CD8-positive, alpha-beta T cell (primary cell): ENCODE measurements at regions of chr6 and their contacts with region 1.

Region 1: GRCh38 chr6:34236131-34236996 is at the start of gene HMGA1:
- DNase-seq: peak; percentile 75 to 95 (median 90)
- ATAC-seq: peak; percentile 70
- H3K4me3 ChIP-seq: peak within 1 kb of the TSS; percentile 77 to 90
- H3K4me3 Mint-ChIP-seq: peak within 1 kb of the TSS; percentile 90
- H3K27ac ChIP-seq: peak within 1 kb of the TSS; percentile 71 to 95
- H3K27ac Mint-ChIP-seq: peak within 1 kb of the TSS; percentile 99
- H3K4me1 ChIP-seq: peaks cover 22% of the 10 kb centered on the region
- H3K4me1 Mint-ChIP-seq: peaks cover 33% of the 10 kb centered on the region
- H3K27me3 ChIP-seq: no peaks in the 10 kb centered on the region
- H3K27me3 Mint-ChIP-seq: no peaks in the 10 kb centered on the region
- CTCF ChIP-seq: no peak
- total RNA-seq, gene HMGA1: 107 to 113 TPM

Region 2: DNA sequence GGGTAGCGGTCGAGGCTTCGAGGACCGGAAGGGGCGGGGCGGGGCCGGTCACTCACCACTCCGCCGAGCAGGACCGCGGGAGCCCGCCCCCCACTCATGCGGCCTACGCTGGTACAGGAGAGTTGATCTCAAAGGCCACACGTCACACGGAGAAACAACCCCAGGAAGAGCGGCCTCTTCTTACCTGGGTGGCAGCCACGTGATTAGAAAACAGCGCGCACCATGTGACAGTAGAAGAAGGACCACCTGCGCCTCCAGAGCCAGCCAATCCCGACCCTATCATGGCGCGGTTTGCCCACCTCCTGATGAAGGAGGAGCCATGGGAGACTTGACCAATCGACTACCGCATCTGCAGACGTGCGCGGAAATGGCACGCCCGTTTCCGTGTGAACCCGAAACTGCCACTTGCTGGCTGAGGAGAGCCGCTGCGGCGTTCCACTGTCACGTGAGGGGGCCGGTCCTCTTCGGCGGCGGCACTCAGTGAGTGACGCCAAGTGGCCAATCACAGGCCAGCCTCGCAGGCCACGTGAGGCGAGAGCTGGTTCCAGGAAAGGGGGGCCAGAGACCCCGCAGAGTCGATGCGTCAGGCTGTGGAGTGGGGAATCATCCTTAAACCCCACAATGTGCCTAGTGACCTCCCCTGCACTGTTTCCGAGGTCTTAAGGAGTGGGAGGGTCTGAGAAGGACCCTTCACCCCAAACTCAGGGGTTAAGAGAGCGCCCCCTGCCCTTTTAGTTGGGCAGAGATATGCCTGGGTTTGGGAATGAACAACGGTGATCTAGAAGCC is 818.3 kb before region 1 on chr6 and contains the start of gene CUTA:
- CTCF ChIA-PET with region 1: no interaction called
- POLR2A ChIA-PET with region 1: no interaction called
- intact Hi-C with region 1: loop called (anchors 5 to 10 kb)
- DNase-seq: peak; percentile 96 to 100 (median 99)
- ATAC-seq: peak; percentile 87
- H3K4me3 ChIP-seq: peak within 1 kb of the TSS; percentile 68 to 70
- H3K4me3 Mint-ChIP-seq: peak within 1 kb of the TSS; percentile 94
- H3K27ac ChIP-seq: peak within 1 kb of the TSS; percentile 83 to 88
- H3K27ac Mint-ChIP-seq: peak within 1 kb of the TSS; percentile 97
- H3K4me1 ChIP-seq: peaks cover 68% of the 10 kb centered on the region
- H3K4me1 Mint-ChIP-seq: peaks cover 83% of the 10 kb centered on the region
- H3K27me3 ChIP-seq: no peaks in the 10 kb centered on the region
- H3K27me3 Mint-ChIP-seq: no peaks in the 10 kb centered on the region
- CTCF ChIP-seq: peak; percentile 27
- total RNA-seq, gene CUTA: 159 to 177 TPM

Region 3: DNA sequence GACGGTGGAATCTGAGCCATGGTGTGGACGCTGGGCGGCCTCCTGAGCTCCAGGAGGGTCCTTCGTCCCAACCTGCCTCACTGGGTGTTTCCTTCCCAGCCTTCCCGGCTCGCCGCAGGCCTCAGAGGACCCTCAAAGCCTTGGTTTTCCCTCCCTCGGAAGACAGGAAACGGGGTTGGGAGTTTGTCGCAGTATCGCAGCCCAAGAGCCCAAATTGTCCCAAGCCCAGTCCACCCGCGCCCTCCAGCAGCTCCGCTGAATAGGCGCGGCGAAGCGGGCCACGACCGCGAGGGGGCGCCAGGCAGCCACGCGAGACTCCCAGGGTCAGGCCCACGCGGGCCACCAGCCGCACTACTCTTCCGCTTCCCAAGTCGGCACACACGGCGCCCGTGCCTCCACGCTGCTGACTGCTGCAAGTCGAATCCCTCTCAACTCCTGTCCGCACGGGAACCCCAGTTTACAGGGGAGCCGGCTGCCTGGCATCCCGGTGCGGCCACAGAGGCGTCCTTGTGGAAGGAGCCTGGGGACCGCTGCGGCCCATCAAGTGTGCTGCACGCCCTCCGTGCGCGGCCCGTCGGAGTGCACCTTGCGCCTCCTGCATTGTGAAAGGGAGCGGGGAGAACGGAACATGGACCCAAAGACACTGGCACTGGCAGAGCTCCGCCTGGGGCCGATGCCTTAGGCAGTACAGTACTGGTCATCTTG is 40.1 kb before region 1 on chr6:
- CTCF ChIA-PET with region 1: interaction called, 7 read pairs
- POLR2A ChIA-PET with region 1: interaction called, 6 read pairs
- intact Hi-C with region 1: loop called (anchors 1 kb)
- DNase-seq: peak; percentile 81 to 97 (median 90)
- ATAC-seq: peak; percentile 100
- H3K4me3 ChIP-seq: peak overlapping the region; percentile 67 to 89
- H3K4me3 Mint-ChIP-seq: peak overlapping the region; percentile 84
- H3K27ac ChIP-seq: peak overlapping the region in 1 of 2 experiments; percentile 32
- H3K27ac Mint-ChIP-seq: peak overlapping the region; percentile 32
- H3K4me1 ChIP-seq: peaks cover 10% of the 10 kb centered on the region
- H3K4me1 Mint-ChIP-seq: peaks cover 9% of the 10 kb centered on the region
- H3K27me3 ChIP-seq: no peaks in the 10 kb centered on the region
- H3K27me3 Mint-ChIP-seq: no peaks in the 10 kb centered on the region
- CTCF ChIP-seq: peak; percentile 85

Region 4: GRCh38 chr6:34392497-34393190 is 156.3 kb after region 1 on chr6 and contains the start of gene NUDT3:
- CTCF ChIA-PET with region 1: no interaction called
- POLR2A ChIA-PET with region 1: interaction called, 6 read pairs
- intact Hi-C with region 1: loop called in 1 of 2 experiments (anchors 1 kb)
- DNase-seq: peak; percentile 90 to 98 (median 93)
- ATAC-seq: peak; percentile 90
- H3K4me3 ChIP-seq: peak within 1 kb of the TSS; percentile 78 to 96
- H3K4me3 Mint-ChIP-seq: peak within 1 kb of the TSS; percentile 72
- H3K27ac ChIP-seq: peak within 1 kb of the TSS; percentile 71 to 75
- H3K27ac Mint-ChIP-seq: peak within 1 kb of the TSS; percentile 94
- H3K4me1 ChIP-seq: peaks cover 15% of the 10 kb centered on the region
- H3K4me1 Mint-ChIP-seq: peaks cover 26% of the 10 kb centered on the region
- H3K27me3 ChIP-seq: no peaks in the 10 kb centered on the region
- H3K27me3 Mint-ChIP-seq: no peaks in the 10 kb centered on the region
- CTCF ChIP-seq: peak; percentile 77
- total RNA-seq, gene NUDT3: 12.5 to 12.9 TPM

Region 5: GRCh38 chr6:34671801-34672656 is 435.7 kb after region 1 on chr6:
- CTCF ChIA-PET with region 1: no interaction called
- POLR2A ChIA-PET with region 1: no interaction called
- intact Hi-C with region 1: loop called in 1 of 2 experiments (anchors 5 kb)
- DNase-seq: peak; percentile 52 to 94 (median 75)
- ATAC-seq: peak; percentile 98
- H3K4me3 ChIP-seq: peak overlapping the region in 1 of 2 experiments; percentile 21
- H3K4me3 Mint-ChIP-seq: peak overlapping the region; percentile 72
- H3K27ac ChIP-seq: peak overlapping the region; percentile 25 to 82
- H3K27ac Mint-ChIP-seq: peak overlapping the region; percentile 95
- H3K4me1 ChIP-seq: peaks cover 50% of the 10 kb centered on the region
- H3K4me1 Mint-ChIP-seq: peaks cover 71% of the 10 kb centered on the region
- H3K27me3 ChIP-seq: no peaks in the 10 kb centered on the region
- H3K27me3 Mint-ChIP-seq: no peaks in the 10 kb centered on the region
- CTCF ChIP-seq: no peak

Region 6: DNA sequence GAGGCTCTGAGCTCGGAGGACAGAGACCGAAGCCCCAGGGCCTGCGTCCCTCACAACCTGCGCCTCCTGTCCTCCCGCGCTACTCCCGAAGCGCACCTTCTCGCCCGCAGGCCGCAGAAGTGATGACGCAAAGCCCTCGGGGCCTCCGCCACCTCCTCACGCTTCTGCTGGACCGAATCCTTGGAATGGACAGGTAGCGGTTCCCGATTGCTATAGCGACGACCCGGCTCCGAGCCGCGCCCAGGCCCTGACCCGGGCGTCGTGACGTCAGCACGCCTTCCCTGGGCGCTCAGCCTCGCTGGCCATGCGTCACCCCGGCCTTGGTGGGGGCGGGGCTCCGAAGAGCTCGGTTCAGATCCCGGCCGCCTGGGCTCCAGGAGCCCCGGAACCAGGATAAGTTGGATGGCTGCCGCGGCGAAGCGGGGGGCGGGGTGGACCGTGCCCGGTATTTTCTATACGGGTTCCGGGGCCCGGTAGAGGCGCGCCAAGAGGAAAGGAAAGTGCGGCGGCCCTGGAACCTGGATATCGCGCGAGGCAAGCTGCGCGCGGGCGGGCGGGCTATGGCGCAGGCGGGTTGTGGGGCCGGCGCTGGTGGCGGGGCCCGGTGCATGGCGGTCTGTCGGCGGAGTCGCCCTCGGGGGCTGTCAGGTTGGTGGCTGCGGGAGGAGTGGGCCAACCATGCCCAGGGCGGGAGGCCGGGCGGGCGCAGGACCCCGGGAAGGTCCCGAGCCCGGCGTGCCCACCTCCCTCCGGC is 1023.0 kb after region 1 on chr6 and contains the start of gene ZNF76:
- CTCF ChIA-PET with region 1: no interaction called
- POLR2A ChIA-PET with region 1: no interaction called
- intact Hi-C with region 1: loop called in 1 of 2 experiments (anchors 5 kb)
- DNase-seq: peak; percentile 86 to 97 (median 93)
- ATAC-seq: peak; percentile 73
- H3K4me3 ChIP-seq: peak within 1 kb of the TSS; percentile 75 to 95
- H3K4me3 Mint-ChIP-seq: peak within 1 kb of the TSS; percentile 97
- H3K27ac ChIP-seq: peak within 1 kb of the TSS; percentile 88 to 96
- H3K27ac Mint-ChIP-seq: peak within 1 kb of the TSS; percentile 99
- H3K4me1 ChIP-seq: peaks cover 42% of the 10 kb centered on the region
- H3K4me1 Mint-ChIP-seq: peaks cover 55% of the 10 kb centered on the region
- H3K27me3 ChIP-seq: no peaks in the 10 kb centered on the region
- H3K27me3 Mint-ChIP-seq: no peaks in the 10 kb centered on the region
- CTCF ChIP-seq: no peak
- total RNA-seq, gene ZNF76: 54.6 to 57.8 TPM